Activated T-helper 2 cell treated with anti-CD3 and anti-CD28 coated beads, Interferon-gamma antibody, Interleukin-2, Interleukin-4, amounts not matched to agents 10 μg/mL and 5 μg/mL and 100 μg/mL, durations not matched to agents 14 hours and 24 hours and 36 hours (primary cell): ENCODE measurements at regions of chr2 and their contacts with region 1.

Region 1: DNA sequence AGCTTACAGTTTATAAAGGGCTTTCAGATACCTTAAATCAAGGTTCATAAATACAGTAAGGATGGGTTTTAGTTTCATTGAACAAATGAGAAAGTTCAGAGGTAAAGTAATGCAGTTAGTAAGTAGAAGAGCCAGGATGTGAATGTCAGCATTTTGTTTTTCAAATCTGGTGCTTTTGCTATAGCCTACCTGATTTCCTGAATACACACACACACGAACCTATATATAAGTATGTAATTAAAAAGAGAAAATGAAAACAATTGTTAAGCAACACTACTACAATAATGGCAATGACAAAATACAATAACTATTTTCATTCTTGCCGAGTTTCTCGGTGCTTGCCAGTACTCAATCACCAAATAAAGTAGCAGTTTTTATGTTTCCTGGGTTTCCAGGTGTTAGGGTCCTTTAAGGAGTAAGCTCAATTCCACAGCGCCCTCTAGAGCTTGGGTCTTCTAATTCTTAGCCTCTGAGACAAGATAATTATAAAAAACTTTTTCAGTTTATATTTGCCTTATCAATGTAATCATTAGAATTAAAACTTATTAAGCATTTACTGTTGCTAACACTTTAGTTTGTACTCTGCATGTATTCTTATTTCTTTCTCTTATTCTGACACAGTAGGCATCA is 512.9 kb upstream of the ACVR2A start:
- DNase-seq: no peak
- H3K4me3 Mint-ChIP-seq: no peak overlapping the region
- H3K27ac Mint-ChIP-seq: no peak overlapping the region
- H3K4me1 Mint-ChIP-seq: peaks cover 8% of the 10 kb centered on the region
- H3K27me3 Mint-ChIP-seq: peaks cover 7% of the 10 kb centered on the region

Region 2: GRCh38 chr2:147045113-147045512 is 286.8 kb before region 1 on chr2:
- intact Hi-C with region 1: loop called (anchors 2 kb)
- DNase-seq: peak; percentile 19
- H3K4me3 Mint-ChIP-seq: no peak overlapping the region
- H3K27ac Mint-ChIP-seq: no peak overlapping the region
- H3K4me1 Mint-ChIP-seq: peaks cover 3% of the 10 kb centered on the region
- H3K27me3 Mint-ChIP-seq: peaks cover 5% of the 10 kb centered on the region

Region 3: DNA sequence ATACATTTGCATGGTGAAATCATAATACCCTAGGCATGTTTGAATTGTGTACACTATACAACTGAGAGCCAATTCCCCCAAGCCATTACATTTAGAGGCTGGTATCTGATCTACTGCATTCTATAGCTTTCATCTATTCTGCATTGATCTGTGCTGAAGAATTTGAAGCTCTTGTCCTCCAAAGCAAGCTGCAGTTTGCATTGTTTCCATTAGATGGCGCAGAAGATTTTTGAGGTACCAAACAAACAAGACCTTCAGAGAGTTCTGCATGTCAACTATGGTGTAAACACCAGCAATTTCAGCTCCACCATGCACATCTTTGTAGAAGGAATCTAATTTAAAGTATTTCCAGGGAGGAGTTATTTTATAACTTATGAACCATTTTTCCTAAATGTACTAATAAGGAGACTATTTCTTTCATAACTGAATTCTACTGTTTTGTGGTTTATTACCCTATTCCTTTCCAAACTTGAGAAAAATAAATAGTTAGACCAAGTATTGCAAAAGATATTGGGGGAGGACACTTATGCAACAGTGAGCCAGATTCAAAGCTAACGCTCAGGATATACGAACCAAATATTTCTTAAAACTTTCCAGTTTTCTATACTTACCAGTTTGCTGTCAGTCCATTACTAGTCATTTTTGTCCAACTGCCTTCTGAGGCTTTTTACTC is 248.9 kb before region 1 on chr2:
- intact Hi-C with region 1: loop called (anchors 1 kb)
- DNase-seq: peak; percentile 31
- H3K4me3 Mint-ChIP-seq: no peak overlapping the region
- H3K27ac Mint-ChIP-seq: no peak overlapping the region
- H3K4me1 Mint-ChIP-seq: peaks cover 5% of the 10 kb centered on the region
- H3K27me3 Mint-ChIP-seq: peaks cover 7% of the 10 kb centered on the region